Mammary epithelial cell (primary cell): ENCODE measurements at regions of chr12 and their contacts with region 1.

Region 1: GRCh38 chr12:12562585-12563261 is at the start of gene DUSP16:
- DNase-seq: peak; percentile 91
- H3K4me3 ChIP-seq: peak within 1 kb of the TSS; percentile 74 to 87 (median 81)
- H3K27ac ChIP-seq: peak within 1 kb of the TSS; percentile 96
- H3K4me1 ChIP-seq: peaks cover 20% of the 10 kb centered on the region
- H3K27me3 ChIP-seq: no peaks in the 10 kb centered on the region
- CTCF ChIP-seq: peak in 1 of 2 donors; percentile 7
- total RNA-seq, gene DUSP16: 11.2 to 16.4 TPM

Region 2: DNA sequence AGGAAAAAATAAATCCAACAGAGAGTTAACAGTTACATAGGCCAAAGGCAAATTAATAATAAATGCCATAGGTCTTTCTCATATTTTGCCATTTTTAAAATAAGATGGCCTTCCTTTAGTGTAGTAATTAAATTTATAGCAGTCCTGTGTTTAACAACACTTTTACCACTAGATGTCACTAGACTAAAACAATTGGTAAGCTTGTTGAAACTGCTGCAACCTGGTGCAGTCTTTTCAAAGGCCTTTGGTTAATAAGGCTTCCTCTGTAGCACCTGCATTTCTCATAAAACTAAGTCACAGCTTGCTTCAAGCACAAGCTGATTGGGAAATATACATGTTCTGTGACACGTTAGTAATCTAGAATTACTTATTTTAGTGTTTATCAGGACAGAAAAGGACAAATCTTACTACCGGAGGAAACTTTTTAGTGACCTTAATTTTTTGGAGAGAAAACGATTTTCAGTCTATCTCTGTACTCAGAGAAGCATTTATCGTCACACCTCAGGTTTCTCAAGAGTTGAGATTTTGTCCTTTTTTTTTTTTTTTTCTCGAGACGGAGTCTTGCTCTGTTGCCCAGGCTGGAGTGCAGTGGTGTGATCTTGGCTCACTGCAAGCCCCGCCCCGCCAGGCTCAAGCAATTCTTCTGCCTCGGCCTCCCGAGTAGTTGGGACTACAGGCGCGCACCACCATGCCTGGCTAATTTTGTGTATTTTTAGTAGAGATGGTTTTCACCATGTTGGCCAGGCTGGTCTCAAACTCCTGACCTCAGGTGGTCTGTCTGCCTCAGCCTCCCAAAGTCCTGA is 185.9 kb before region 1 on chr12:
- CTCF ChIA-PET with region 1: no interaction called
- dilution Hi-C with region 1: no loop called
- in situ Hi-C with region 1: loop called (anchors 25 kb)
- intact Hi-C with region 1: loop called (anchors 1 kb)
- DNase-seq: peak; percentile 68
- H3K4me3 ChIP-seq: no peak overlapping the region
- H3K27ac ChIP-seq: no peak overlapping the region
- H3K4me1 ChIP-seq: no peaks in the 10 kb centered on the region
- H3K27me3 ChIP-seq: no peaks in the 10 kb centered on the region
- CTCF ChIP-seq: peak; percentile 61 to 67

Region 3: DNA sequence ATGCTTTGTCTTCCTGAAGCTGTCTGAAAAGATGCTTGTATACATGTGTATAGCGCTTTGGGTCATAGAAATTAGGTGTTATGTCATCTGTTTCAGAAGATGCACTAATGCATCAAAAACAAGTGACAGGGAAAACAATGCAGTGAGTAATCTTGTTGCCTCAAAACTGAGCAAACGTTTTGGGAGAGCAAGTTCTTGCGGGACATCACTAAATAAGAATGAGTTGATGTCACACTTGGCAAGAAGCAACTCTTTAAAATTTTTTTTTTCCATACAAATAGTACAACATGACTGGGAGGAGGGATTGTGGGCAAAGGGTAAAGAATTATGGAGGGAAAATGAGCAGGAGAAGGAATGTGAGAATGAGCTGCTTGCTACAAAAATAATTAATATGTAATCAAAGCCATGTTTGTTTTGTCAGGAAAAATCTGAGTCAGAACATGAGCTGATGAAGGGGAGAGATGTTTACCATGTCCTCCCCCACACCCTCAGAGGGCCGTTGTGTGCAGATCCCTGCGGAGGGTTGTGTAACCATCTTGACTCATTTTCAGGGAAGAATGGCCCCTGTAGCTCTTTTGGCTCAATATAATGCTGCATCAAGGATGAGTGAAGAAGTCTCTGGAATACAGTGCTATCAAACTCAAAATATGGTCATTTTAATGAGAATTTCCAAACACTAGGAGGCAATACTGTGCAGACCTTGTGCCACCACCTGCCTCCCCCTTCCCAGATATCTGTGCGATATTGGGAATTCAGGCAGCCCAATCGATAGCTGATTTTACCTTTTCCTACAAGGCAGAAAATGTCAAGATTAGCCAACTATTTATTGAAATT is 164.5 kb before region 1 on chr12:
- CTCF ChIA-PET with region 1: no interaction called
- dilution Hi-C with region 1: no loop called
- in situ Hi-C with region 1: loop called (anchors 25 kb)
- intact Hi-C with region 1: loop called (anchors 1 kb)
- DNase-seq: peak; percentile 90
- H3K4me3 ChIP-seq: no peak overlapping the region
- H3K27ac ChIP-seq: peak overlapping the region; percentile 42
- H3K4me1 ChIP-seq: peaks cover 21% of the 10 kb centered on the region
- H3K27me3 ChIP-seq: no peaks in the 10 kb centered on the region
- CTCF ChIP-seq: peak in 1 of 2 donors; percentile 9

Region 4: GRCh38 chr12:12510141-12510540 is 52.6 kb before region 1 on chr12:
- CTCF ChIA-PET with region 1: no interaction called
- dilution Hi-C with region 1: no loop called
- in situ Hi-C with region 1: no loop called
- intact Hi-C with region 1: loop called (anchors 1 kb)
- DNase-seq: peak; percentile 88
- H3K4me3 ChIP-seq: no peak overlapping the region
- H3K27ac ChIP-seq: peak overlapping the region; percentile 69
- H3K4me1 ChIP-seq: peaks cover 18% of the 10 kb centered on the region
- H3K27me3 ChIP-seq: no peaks in the 10 kb centered on the region
- CTCF ChIP-seq: no peak

Region 5: DNA sequence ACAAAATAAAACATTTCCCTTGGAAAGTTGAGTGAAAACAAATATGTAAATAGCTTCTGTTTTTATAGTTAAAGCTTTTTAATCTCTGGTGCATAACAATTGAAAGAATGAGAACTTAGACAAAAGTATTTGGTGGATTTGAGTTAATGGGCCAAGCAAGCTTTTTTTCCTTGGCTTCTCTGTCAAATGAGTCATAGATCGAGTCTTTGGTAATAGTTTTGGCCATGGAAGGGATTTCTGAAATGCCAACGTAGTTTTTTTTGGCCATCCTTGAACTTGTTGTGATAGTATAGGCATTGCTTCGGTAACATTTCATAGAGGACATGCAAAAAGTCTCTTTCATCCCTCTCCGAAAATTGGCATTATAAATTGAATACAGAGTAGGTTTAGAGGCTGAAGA is 98.4 kb after region 1 on chr12:
- CTCF ChIA-PET with region 1: no interaction called
- dilution Hi-C with region 1: no loop called
- in situ Hi-C with region 1: no loop called
- intact Hi-C with region 1: loop called (anchors 1 kb)
- DNase-seq: peak; percentile 46
- H3K4me3 ChIP-seq: no peak overlapping the region
- H3K27ac ChIP-seq: no peak overlapping the region
- H3K4me1 ChIP-seq: peaks cover 6% of the 10 kb centered on the region
- H3K27me3 ChIP-seq: no peaks in the 10 kb centered on the region
- CTCF ChIP-seq: no peak